Common myeloid progenitor, CD34-positive (primary cell): ENCODE measurements at regions of chr3 and their contacts with region 1.

Region 1: DNA sequence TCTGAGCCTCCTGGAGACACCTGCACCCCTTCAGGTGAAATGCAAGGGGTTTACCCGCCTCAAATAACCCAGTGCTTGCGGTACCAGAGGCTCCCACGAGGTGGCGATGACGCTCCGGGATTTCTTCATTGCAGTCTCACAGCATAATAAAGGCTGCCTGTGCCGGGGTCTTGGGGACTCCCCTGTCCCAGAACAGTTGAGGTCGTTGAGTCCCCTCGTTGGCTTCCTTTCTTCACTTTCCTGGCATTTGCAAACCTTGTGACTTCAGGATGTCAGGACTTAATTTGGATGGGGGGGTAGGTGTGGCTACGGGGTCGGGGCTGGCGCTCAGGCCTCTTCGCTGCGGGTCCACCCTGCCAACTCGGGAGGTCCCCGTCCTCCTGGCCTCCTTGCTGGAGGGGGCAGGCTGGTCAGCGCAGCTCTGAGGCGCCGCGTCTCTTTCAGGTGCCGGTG is 1.3 kb downstream of the GNAT1 start:
- DNase-seq: peak; percentile 67 to 85 (median 77)
- H3K4me3 ChIP-seq: no peak overlapping the region
- H3K27ac ChIP-seq: no peak overlapping the region
- H3K4me1 ChIP-seq: peaks cover 0 to 19% (median 15%) of the 10 kb centered on the region in 4 experiments
- H3K27me3 ChIP-seq: peaks cover 0 to 38% (median 23%) of the 10 kb centered on the region in 5 experiments

Region 2: GRCh38 chr3:50121416-50122032 is 71.2 kb before region 1 on chr3:
- CTCF ChIA-PET with region 1: interaction called, 194 read pairs
- POLR2A ChIA-PET with region 1: interaction called, 5 read pairs
- DNase-seq: peak; percentile 75 to 90 (median 84)
- H3K4me3 ChIP-seq: no peak overlapping the region
- H3K27ac ChIP-seq: no peak overlapping the region
- H3K4me1 ChIP-seq: peaks cover 0 to 6% (median 2%) of the 10 kb centered on the region in 4 experiments
- H3K27me3 ChIP-seq: no peaks in the 10 kb centered on the region

Region 3: DNA sequence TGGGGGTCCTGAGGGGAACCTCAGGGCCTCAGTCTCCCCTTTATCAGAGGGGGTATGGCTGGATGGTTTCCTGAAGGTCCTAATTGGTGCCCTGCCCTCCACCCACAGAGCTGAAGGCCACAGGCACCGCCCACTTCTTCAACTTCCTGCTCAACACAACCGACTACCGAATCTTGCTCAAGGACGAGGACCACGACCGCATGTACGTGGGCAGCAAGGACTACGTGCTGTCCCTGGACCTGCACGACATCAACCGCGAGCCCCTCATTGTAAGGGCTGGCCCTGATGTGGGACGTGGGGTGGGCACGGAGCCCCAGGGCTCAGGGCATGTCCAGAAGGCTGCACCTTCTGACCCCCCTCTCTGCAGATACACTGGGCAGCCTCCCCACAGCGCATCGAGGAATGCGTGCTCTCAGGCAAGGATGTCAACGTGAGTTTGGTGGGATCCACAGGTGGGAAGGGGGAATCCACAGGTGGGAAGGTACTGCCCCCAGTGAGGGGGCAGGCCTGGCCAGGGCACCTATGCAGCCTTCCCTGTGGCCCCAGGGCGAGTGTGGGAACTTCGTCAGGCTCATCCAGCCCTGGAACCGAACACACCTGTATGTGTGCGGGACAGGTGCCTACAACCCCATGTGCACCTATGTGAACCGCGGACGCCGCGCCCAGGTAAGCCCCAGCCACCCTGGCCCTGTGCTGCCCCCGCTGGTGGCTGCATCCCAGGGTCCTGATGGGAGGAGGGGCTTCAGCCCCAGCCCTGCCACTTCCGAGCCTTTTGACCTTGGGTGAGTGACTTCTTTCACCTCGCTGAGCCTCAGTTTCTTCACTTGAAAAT is 18.8 kb before region 1 on chr3:
- CTCF ChIA-PET with region 1: interaction called, 13 read pairs
- POLR2A ChIA-PET with region 1: no interaction called
- DNase-seq: peak in 1 of 3 donors; percentile 34
- H3K4me3 ChIP-seq: no peak overlapping the region
- H3K27ac ChIP-seq: no peak overlapping the region
- H3K4me1 ChIP-seq: peaks cover 0 to 8% (median 2%) of the 10 kb centered on the region in 4 experiments
- H3K27me3 ChIP-seq: no peaks in the 10 kb centered on the region

Region 4: GRCh38 chr3:50205414-50206276 is 12.9 kb after region 1 on chr3:
- CTCF ChIA-PET with region 1: interaction called, 166 read pairs
- POLR2A ChIA-PET with region 1: interaction called, 3 read pairs
- DNase-seq: peak; percentile 46 to 64 (median 60)
- H3K4me3 ChIP-seq: peak overlapping the region; percentile 15 to 71 (median 23)
- H3K27ac ChIP-seq: no peak overlapping the region
- H3K4me1 ChIP-seq: peaks cover 0 to 17% (median 12%) of the 10 kb centered on the region in 4 experiments
- H3K27me3 ChIP-seq: peaks cover 0 to 52% (median 33%) of the 10 kb centered on the region in 5 experiments

Region 5: DNA sequence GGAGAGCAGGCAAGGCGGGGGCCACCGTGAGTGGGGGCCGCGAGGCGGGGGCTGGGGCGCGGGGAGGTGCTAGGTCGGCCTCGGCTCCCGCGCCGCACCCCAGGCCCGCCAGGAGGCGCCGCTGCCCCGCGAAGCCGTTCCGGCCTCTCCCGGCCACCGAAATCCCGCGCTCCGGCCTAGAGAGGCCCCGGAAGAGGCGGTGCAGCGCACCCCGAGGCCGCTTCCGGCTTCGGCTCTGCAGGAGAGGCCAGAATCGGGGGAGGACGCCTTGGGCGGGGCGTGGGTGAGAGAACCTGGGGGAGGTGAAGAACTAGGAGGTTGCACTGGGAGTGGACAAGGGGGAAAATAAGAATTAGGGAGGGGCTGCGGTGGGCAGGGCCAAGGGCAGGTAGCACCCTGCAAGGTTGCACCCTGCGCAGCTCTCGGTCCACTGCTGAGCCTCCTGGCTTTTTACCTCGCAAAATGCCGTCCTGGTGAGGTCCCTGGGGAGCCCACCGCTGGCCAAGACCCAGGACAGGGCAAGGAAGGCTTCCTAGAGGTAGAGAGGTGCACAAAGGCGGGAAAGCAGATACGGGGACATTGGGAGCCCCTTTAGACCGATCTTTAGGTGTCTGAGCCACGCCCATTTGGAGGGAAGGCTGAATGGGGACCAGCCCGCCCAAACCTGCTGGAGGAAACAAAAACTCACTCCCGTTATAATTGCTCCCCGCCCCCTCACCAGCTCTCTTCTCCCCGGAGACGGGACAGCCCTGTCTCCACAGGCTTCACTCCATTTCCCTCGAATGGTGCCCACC is 34.9 kb after region 1 on chr3:
- CTCF ChIA-PET with region 1: interaction called, 1,875 read pairs
- POLR2A ChIA-PET with region 1: interaction called, 7 read pairs
- DNase-seq: peak; percentile 84 to 88 (median 88)
- H3K4me3 ChIP-seq: peak overlapping the region; percentile 43 to 88 (median 81)
- H3K27ac ChIP-seq: peak overlapping the region; percentile 25 to 71
- H3K4me1 ChIP-seq: peaks cover 0 to 45% (median 34%) of the 10 kb centered on the region in 4 experiments
- H3K27me3 ChIP-seq: peaks cover 0 to 4% (median 0%) of the 10 kb centered on the region in 5 experiments

Region 6: GRCh38 chr3:50260027-50260941 is 67.6 kb after region 1 on chr3:
- CTCF ChIA-PET with region 1: interaction called, 1,875 read pairs
- POLR2A ChIA-PET with region 1: no interaction called
- DNase-seq: peak; percentile 75 to 88 (median 87)
- H3K4me3 ChIP-seq: peak overlapping the region; percentile 32 to 76 (median 64)
- H3K27ac ChIP-seq: peak overlapping the region; percentile 50 to 75
- H3K4me1 ChIP-seq: peaks cover 0 to 16% (median 14%) of the 10 kb centered on the region in 4 experiments
- H3K27me3 ChIP-seq: peaks cover 0 to 2% (median 0%) of the 10 kb centered on the region in 5 experiments

Region 7: GRCh38 chr3:50278868-50279224 is 86.1 kb after region 1 on chr3 and contains the start of gene LSMEM2:
- CTCF ChIA-PET with region 1: interaction called, 1,875 read pairs
- POLR2A ChIA-PET with region 1: interaction called, 4 read pairs
- DNase-seq: no peak
- H3K4me3 ChIP-seq: no peak within 1 kb of the TSS
- H3K27ac ChIP-seq: no peak within 1 kb of the TSS
- H3K4me1 ChIP-seq: peaks cover 0 to 23% (median 17%) of the 10 kb centered on the region in 4 experiments
- H3K27me3 ChIP-seq: peaks cover 0 to 47% (median 20%) of the 10 kb centered on the region in 5 experiments